GM10248 (cell line): ENCODE measurements at regions of chr10 and their contacts with region 1.

Region 1: DNA sequence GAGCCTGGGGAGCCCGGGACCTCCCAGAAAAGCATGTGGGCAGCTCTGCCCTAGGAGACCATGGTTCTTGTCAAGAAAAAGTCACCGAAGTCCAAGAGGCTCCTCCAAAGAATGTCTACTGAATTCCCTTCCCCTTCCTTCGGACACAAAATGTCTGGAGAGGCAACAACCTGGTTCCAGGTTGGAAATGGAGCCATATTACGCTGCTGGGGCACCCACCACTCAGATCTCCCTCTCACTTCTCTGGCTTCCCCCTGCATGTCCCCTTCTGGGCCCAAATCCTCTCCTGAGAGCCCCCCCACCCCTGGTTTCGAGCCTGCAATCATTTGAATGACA is 52.6 kb downstream of the RGS10 start:
- DNase-seq: no peak
- CTCF ChIP-seq: no peak

Region 2: DNA sequence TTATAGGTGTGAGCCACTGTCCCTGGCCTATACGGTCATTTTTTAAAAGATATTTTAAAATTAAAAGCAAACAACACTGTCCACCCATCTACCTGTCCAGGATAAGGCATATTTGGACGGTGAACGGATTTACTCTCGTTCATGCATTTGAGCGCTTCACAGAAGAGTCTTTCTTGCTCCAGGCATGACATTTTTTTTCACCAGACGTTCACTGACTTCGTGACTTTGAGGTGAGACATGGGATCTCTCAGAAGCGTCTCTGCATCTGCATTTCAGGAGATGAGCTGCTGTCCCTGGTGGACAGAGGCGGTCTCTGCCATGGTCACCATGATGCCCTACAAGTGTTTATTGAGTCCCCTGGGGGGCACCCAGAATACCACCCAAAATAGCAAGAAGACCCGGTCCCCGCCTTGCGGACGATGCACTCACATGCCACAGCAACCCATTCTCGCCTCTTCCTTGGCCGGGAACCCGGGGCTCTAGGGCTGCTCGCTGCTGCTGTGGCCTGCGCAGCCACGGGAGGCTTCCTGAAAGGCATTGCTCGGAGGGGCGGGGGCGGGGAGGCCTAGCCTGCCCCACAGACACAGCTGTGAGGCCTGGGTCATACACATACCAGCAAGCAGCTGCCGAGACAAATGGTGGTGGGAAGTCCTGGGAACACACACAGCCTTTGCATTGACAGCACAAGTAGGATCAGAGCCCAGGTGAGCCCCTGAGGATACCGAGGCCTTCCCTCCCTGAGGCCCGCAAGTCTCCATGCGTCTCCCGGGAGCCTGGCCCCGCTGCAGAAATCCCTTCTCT is 31.8 kb before region 1 on chr10:
- CTCF ChIA-PET with region 1: interaction called, 17 read pairs
- POLR2A ChIA-PET with region 1: no interaction called
- DNase-seq: no peak
- CTCF ChIP-seq: no peak

Region 3: GRCh38 chr10:119466655-119467054 is 23.3 kb before region 1 on chr10:
- CTCF ChIA-PET with region 1: interaction called, 17 read pairs
- POLR2A ChIA-PET with region 1: no interaction called
- DNase-seq: peak; percentile 59
- CTCF ChIP-seq: no peak

Region 4: DNA sequence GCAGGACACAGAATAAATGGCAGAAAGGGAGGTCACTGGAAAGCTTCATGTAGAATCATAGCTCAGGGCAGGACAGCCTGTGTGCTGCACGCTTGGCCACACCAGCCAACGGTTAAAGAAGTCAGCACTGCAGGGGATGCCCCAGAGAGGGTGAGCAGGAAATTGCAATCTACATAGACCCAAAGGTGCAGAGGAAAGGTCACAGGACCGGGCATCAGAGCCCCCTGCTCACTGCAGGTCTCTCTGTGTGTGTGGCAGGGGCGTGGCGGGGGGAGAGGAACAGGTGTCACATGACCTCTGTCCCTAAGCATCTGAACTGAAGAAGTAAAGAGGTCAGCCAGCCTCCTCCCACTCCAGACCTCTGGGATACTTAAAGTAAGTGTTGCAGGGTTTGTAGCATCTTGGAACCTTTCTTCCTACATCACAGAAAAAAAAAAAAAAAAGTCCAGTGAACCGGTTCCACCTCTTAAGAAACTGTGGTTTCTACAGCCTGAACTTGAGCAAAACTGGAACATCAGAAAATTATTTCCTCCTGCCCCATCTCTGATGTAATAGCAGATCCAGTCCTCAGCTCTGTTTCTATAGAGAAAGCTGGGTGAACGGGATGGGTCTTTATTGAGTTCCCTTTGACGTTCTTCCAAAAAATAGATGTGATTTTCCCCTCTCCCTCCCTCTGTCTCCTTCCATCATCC is 11.7 kb before region 1 on chr10:
- CTCF ChIA-PET with region 1: interaction called, 57 read pairs
- POLR2A ChIA-PET with region 1: no interaction called
- DNase-seq: peak; percentile 59
- CTCF ChIP-seq: peak; percentile 3

Region 5: DNA sequence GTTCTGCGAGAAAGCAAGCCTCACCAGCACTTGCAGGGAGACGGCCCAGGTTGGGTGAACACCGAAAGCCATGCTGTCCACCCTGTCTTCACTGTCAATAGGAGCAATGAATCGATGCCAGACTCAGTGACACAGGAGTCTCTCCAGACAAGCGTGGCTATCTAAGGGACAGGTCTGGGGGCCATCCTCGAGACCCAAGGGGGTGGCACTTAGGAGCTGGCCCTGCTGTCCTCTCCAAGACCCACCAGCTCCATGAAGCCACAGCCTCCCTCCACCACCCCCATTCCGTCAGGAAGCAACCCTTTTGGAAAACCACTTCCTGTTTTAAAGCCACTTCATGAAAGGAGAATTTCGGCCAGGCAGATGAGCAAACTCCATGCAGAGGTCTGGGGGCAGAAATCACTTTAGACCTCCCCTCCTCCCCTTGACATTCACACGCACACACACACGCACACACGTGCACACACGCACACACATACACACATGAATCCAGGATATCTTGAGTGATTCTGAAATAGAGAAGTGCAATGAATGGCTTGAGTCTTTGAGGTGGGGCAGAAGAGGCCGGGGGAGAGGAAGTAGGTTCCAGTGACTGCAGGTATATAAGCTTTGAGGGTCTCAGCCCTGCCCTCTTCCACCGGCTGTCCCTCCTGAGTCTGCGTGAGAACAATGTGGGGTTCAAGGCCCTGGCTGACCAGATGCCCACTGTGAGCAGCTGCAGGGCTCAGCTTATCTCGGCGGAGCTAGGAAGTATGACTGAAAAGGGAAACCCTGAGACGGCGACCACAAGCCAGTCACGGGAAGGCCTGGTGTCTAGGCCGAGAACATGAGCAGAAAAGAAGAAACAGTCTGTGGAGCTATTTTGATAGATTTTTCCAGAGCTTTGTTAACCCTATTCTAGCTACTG is 27.5 kb after region 1 on chr10:
- CTCF ChIA-PET with region 1: interaction called, 11 read pairs
- POLR2A ChIA-PET with region 1: no interaction called
- DNase-seq: peak; percentile 66
- CTCF ChIP-seq: no peak

Region 6: GRCh38 chr10:119715628-119716505 is 225.9 kb after region 1 on chr10:
- CTCF ChIA-PET with region 1: no interaction called
- POLR2A ChIA-PET with region 1: no interaction called
- DNase-seq: no peak
- CTCF ChIP-seq: no peak